ENCODE measurements at regions of chr7 and their contacts with region 1.

Region 1: GRCh38 chr7:44200647-44201461 is at the start of gene YKT6:
- DNase-seq: peak; percentile 97
- H3K4me3 ChIP-seq: peak within 1 kb of the TSS; percentile 90 to 100 (median 98)
- H3K27ac ChIP-seq: peak within 1 kb of the TSS; percentile 55
- H3K4me1 ChIP-seq: peaks cover 8% of the 10 kb centered on the region
- H3K27me3 ChIP-seq: no peaks in the 10 kb centered on the region
- CTCF ChIP-seq: peak; percentile 15 to 65
- total RNA-seq, gene YKT6: 105 to 133 TPM

Region 2: DNA sequence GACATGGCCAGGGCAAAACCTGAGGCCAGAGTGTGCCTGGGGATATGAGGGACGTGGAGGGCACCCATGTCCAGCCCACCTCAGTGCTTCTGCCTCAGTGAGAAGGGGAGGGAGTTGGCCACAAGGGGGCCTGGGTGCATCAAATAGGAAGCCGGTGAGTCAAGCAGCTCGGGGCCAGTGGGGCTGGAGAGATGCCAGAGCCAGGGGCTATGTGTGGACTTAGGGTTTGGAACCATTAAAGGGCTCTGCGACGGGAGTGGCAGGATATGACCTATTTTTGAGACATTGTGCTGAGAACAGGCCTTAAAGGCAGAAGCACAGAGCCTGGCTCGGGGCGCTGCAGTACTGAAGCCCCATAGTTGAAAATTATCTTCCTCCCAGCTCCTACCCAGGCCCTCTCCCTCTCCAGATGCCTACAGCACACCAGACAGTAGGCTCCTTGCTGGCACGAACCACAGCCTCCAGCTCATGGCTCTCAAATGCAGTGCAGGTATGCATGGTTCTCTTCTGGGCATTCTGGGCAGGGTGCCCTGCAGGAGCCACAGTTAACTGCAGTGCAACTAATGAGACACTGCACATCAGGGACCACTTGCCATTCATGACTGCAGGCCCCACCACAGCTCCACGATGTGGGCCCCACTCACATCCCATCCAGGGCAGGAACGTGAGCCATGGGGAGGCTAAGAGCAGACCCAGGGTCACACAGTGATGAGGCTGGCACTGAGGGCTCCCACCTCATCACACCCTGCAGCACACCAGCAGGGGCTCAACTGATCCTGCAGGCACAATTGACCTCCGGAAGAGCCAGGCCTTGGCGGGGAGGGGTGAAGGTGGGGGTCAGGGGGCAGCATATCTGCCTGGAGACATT is 128.3 kb before region 1 on chr7:
- CTCF ChIA-PET with region 1: no interaction called
- dilution Hi-C with region 1: no loop called
- in situ Hi-C with region 1: no loop called
- intact Hi-C with region 1: loop called (anchors 1 kb)
- DNase-seq: peak; percentile 83
- H3K4me3 ChIP-seq: no peak overlapping the region
- H3K27ac ChIP-seq: no peak overlapping the region
- H3K4me1 ChIP-seq: peaks cover 40% of the 10 kb centered on the region
- H3K27me3 ChIP-seq: no peaks in the 10 kb centered on the region
- CTCF ChIP-seq: peak; percentile 75 to 76

Region 3: GRCh38 chr7:44123190-44124003 is 77.5 kb before region 1 on chr7 and contains the start of gene POLD2:
- CTCF ChIA-PET with region 1: no interaction called
- dilution Hi-C with region 1: no loop called
- in situ Hi-C with region 1: no loop called
- intact Hi-C with region 1: loop called (anchors 2 kb)
- DNase-seq: peak; percentile 96
- H3K4me3 ChIP-seq: peak within 1 kb of the TSS; percentile 77 to 89 (median 84)
- H3K27ac ChIP-seq: peak within 1 kb of the TSS; percentile 87
- H3K4me1 ChIP-seq: peaks cover 20% of the 10 kb centered on the region
- H3K27me3 ChIP-seq: no peaks in the 10 kb centered on the region
- CTCF ChIP-seq: no peak
- total RNA-seq, gene POLD2: 72.8 to 144 TPM

Region 4: DNA sequence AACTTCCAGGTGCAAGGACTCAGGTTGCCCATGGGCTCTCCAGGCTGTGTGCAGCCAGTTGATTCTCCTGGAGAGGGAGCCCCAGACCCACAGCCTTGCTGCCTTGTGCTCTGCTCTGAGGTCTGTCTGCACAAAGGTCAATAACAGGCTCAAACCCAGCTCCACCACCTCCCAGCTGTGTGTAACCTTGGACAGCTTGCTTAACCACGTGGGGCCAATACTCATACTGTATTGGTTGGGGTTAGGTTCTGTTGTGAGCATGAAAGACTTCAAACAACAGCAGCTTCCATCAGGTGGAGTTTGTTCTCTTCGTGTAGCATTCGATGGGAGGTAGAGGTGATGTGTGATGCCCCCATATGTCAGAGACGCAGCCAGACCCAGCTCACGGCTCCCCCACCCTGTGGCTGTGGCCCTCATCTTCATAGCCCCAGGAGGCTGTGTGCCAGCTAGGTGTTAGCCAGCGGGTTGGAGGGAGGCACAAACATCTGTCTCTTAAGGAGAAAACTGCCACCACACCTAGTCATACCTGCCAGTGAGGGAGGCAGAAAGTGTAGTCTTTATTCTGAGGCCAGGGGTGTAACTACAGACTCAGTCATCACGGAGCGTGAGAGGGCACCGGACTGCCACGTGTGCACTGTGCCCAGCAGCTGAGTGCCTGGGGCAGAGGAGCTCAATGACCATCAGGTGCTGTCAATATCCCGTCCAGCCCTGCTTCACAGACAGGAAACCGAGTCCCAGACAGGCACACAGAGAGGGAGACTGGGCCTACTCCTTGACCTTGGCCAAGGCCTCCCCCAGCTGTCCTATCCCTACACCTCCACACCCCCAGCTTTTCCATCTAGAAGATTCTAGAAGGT is 69.5 kb before region 1 on chr7:
- CTCF ChIA-PET with region 1: no interaction called
- dilution Hi-C with region 1: no loop called
- in situ Hi-C with region 1: no loop called
- intact Hi-C with region 1: loop called (anchors 1 kb)
- DNase-seq: peak; percentile 6
- H3K4me3 ChIP-seq: no peak overlapping the region
- H3K27ac ChIP-seq: no peak overlapping the region
- H3K4me1 ChIP-seq: no peaks in the 10 kb centered on the region
- H3K27me3 ChIP-seq: no peaks in the 10 kb centered on the region
- CTCF ChIP-seq: peak; percentile 35 to 58

Region 5: GRCh38 chr7:44573464-44574286 is 372.8 kb after region 1 on chr7 and contains the start of gene DDX56:
- CTCF ChIA-PET with region 1: no interaction called
- dilution Hi-C with region 1: no loop called
- in situ Hi-C with region 1: loop called in 1 of 2 experiments (anchors 25 kb)
- intact Hi-C with region 1: no loop called
- DNase-seq: peak; percentile 90
- H3K4me3 ChIP-seq: peak within 1 kb of the TSS; percentile 72 to 96 (median 91)
- H3K27ac ChIP-seq: peak within 1 kb of the TSS; percentile 53
- H3K4me1 ChIP-seq: peaks cover 10% of the 10 kb centered on the region
- H3K27me3 ChIP-seq: no peaks in the 10 kb centered on the region
- CTCF ChIP-seq: no peak
- total RNA-seq, gene DDX56: 51.3 to 85.8 TPM

Measured in mammary epithelial cell (primary cell).